GM10248 (cell line): ENCODE measurements at regions of chr12 and their contacts with region 1.

Region 1: DNA sequence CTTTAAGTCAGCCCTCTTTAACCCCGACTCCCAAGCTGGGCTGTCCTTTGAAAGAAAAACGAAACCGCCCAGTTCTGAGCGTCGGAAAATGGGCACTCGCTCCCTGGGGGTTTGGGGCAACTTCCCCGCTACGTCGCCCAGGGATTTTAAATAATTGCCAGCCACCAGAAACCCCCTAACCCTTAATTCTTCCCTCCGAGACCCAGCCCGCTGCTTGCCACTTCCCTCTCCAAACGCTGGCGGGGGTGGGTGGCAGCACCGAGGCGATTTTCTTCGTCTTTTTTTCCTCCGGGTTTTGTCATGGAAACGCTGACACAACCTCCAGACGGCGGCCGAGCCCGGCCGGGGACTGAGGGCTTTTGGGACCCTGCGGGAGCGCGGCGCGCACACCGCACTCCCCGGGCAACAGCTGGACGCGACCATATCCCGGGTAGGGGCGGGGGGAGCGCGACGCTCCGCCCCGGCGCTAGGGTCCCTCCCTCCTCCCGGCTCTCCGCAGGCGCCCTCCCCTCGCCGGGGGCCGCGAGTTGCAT is at the start of gene CHST11:
- DNase-seq: peak; percentile 94
- CTCF ChIP-seq: no peak

Region 2: DNA sequence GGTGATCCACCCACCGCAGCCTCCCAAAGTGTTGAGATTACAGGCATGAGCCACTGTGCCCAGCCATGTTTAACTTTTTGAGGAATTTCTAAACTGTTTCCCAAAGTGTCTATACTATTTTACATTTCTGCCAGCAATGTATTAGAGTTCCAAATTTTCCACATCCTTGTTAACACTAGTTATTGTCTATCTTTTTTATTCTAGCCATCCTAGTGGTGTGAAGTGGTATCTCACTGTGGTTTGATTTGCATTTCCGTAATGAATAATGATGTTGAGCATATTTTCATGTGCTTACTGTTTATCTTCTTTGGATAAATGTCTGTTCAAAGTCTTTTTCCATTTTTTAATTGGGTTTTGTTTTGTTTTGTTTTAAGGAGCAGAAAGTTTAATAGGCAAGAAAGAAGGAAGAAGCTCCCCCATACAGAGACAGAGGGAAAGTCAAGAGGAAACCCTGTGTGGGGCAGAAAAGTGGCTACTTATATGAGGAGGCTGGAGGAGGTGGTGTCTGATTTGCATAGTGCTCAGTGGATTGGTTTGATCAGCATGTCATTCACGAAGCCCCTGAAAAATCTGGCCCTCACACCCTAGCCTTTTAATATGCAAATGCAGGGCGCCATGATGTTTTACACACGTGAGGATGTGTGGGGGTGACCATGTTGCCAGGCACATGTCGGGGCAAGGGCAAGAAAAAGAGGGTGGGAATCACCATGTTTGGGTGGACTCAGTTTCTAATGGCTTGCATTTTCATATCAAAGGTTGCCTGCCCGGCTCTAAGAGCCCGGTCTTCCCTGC is 226.0 kb before region 1 on chr12:
- CTCF ChIA-PET with region 1: no interaction called
- POLR2A ChIA-PET with region 1: no interaction called
- DNase-seq: no peak
- CTCF ChIP-seq: no peak

Region 3: GRCh38 chr12:104473374-104473983 is 17.0 kb after region 1 on chr12:
- CTCF ChIA-PET with region 1: interaction called, 20 read pairs
- POLR2A ChIA-PET with region 1: interaction called, 5 read pairs
- DNase-seq: no peak
- CTCF ChIP-seq: no peak

Region 4: GRCh38 chr12:104478396-104479122 is 22.1 kb after region 1 on chr12:
- CTCF ChIA-PET with region 1: interaction called, 20 read pairs
- POLR2A ChIA-PET with region 1: interaction called, 5 read pairs
- DNase-seq: peak; percentile 64
- CTCF ChIP-seq: no peak

Region 5: DNA sequence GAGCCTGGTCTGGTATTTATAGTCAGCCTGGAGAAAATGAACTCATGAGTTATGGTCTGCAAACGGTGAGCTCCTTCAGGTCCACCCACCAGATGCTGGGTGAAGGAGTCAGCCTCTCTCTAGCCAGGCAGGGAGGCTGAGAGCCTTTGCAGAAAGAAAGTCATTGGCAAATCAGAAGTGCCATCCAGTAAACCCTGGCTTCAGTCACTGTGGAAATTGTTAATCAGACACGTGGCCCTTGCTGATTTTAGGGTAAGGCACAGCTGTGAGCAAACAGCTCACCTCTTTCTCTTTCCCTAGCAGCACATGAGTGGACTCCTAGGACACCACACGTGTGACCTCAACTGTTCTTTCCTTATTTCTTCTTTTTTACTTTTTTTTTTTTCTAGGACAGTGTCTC is 45.2 kb after region 1 on chr12:
- CTCF ChIA-PET with region 1: interaction called, 18 read pairs
- POLR2A ChIA-PET with region 1: no interaction called
- DNase-seq: no peak
- CTCF ChIP-seq: no peak